Dendritic cell treated with granulocyte-macrophage colony-stimulating factor and Interleukin-4, amounts not matched to agents 40 ng/mL and 50 ng/mL, for 4 days (primary cell): ENCODE measurements at regions of chr20 and their contacts with region 1.

Region 1: DNA sequence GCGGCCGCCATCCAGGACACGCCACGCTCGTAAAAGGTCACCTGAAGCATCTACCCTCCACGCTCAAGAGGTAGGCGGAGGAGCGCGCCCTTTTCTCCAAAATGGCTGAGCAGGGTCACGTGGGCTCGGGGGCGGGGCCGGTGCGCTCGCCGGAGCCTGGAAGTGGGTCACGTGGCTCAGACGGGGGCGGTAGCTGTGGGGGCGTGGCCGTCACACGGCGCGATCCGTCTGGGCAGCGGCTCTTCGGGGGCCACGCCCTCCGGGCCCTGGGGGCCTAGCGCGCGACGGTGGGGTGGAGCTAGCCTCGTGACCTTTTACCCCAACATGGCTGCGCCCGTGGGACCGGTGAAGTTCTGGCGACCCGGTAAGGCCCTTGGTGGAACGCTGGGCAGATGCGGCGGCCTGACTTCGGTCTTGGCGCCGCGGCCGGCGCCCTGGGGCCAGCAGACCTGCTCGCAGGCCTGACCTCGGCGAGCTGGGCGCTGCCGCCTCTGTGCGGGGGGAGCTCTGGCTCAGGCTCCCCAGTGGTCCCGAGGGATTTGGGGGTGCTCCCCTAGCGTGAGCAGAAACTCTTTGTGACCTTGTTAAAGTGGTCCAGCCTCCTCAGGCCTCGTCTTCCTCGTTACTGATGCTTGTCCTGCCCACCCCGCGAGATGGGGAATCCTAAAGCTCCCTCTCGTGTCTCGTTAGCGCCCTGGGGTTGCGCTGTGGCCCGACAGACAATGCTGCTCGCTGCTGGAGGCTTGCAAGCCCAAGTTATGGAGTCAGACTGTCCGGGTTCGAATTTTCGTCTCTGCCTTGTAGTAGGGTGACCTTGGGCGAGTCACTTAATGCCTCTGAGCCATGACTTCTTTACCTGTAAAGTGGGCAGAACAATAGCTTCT is at the start of gene DHX35:
- H3K4me3 Mint-ChIP-seq: peak within 1 kb of the TSS; percentile 95
- H3K27ac Mint-ChIP-seq: peak within 1 kb of the TSS; percentile 92
- H3K4me1 Mint-ChIP-seq: peaks cover 32% of the 10 kb centered on the region
- H3K27me3 Mint-ChIP-seq: no peaks in the 10 kb centered on the region

Region 2: GRCh38 chr20:38926142-38926933 is 35.9 kb before region 1 on chr20 and contains the start of gene FAM83D:
- intact Hi-C with region 1: loop called (anchors 1 kb)
- H3K4me3 Mint-ChIP-seq: peak within 1 kb of the TSS; percentile 78
- H3K27ac Mint-ChIP-seq: peak within 1 kb of the TSS; percentile 61
- H3K4me1 Mint-ChIP-seq: peaks cover 22% of the 10 kb centered on the region
- H3K27me3 Mint-ChIP-seq: no peaks in the 10 kb centered on the region